GM13976 (cell line): ENCODE measurements at regions of chr1 and their contacts with region 1.

Region 1: GRCh38 chr1:206982216-206982615 is 12.0 kb upstream of the FCAMR start:
- DNase-seq: peak; percentile 72
- CTCF ChIP-seq: peak; percentile 79

Region 2: DNA sequence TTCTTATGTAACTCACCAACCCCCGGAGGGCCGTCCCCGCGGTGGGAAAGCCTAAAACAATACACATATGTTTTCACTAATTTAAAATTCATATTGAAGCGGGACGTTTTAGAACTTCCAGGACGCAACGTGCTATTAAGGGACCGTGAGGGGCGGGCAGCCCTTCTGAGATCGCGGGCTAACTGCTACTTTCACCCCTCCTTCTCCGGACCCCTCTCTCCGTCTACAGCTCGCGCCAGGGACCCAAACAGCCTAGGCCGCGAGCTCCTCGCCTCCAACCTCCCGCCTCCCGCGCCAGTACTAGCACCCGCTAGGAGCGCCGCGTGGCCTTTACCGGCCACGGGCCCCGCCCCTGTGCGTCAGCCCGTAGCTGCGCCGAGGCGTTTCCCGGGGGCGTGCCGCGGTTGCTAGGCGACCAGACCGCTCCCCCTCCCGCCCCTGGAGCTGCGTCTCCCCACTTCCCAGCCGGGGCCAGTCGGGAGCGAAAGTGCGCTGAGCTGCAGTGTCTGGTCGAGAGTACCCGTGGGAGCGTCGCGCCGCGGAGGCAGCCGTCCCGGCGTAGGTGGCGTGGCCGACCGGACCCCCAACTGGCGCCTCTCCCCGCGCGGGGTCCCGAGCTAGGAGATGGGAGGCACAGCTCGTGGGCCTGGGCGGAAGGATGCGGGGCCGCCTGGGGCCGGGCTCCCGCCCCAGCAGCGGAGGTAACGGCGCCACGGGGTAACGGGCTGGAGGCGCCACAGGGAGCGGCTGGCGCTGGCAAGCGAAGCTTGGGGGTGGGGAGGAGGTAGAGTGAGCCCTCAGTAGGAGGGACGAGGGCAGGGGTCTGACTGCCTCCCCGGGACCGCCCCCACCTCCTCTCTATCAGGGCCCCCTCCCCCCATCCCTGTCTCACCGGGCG is 346.9 kb before region 1 on chr1 and contains the start of gene DYRK3:
- in situ Hi-C with region 1: loop called (anchors 10 kb)
- DNase-seq: peak; percentile 98
- CTCF ChIP-seq: no peak

Region 3: DNA sequence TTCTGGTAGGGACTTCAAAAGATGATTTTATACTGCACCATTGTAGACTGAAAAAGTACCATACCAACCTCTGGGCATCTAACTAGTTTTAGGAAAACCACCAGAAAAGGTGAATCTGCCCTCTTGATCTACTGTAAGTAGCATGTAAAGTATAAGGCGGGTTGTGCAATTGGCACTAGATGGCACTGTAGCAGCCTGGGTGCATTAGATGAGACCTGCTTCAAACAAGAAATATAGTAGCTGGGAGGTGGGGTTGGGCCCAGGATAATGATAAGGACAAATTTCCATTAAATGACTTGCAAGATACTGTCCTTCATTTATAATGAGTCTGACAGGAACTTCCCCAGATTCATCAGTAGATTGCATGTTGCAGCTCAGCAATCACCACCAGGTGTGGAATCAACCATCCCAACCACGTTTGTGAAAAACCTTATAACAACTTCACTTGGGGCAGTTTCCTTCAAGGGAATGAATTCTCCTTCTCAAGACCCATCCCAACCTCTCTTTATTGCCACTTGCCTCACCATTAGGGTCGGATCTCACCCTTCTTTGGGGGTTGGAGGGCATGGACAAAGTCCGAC is 172.6 kb before region 1 on chr1:
- in situ Hi-C with region 1: loop called (anchors 5 kb)
- DNase-seq: no peak
- CTCF ChIP-seq: peak; percentile 37